ENCODE measurements at regions of chr11 and their contacts with region 1.

Region 1: GRCh38 chr11:95067039-95067840 is 521 bp downstream of the SRSF8 start:
- DNase-seq: peak; percentile 72 to 80 (median 78)
- H3K4me3 ChIP-seq: peak overlapping the region; percentile 92 to 96
- H3K4me3 Mint-ChIP-seq: peak overlapping the region; percentile 94 to 98 (median 96)
- H3K27ac ChIP-seq: peak overlapping the region; percentile 95
- H3K27ac Mint-ChIP-seq: peak overlapping the region; percentile 94 to 98 (median 96)
- H3K4me1 ChIP-seq: peaks cover 32% of the 10 kb centered on the region
- H3K4me1 Mint-ChIP-seq: peaks cover 20 to 35% (median 29%) of the 10 kb centered on the region in 4 donors
- H3K27me3 ChIP-seq: no peaks in the 10 kb centered on the region
- H3K27me3 Mint-ChIP-seq: peaks cover 0 to 3% of the 10 kb centered on the region in 2 donors

Region 2: DNA sequence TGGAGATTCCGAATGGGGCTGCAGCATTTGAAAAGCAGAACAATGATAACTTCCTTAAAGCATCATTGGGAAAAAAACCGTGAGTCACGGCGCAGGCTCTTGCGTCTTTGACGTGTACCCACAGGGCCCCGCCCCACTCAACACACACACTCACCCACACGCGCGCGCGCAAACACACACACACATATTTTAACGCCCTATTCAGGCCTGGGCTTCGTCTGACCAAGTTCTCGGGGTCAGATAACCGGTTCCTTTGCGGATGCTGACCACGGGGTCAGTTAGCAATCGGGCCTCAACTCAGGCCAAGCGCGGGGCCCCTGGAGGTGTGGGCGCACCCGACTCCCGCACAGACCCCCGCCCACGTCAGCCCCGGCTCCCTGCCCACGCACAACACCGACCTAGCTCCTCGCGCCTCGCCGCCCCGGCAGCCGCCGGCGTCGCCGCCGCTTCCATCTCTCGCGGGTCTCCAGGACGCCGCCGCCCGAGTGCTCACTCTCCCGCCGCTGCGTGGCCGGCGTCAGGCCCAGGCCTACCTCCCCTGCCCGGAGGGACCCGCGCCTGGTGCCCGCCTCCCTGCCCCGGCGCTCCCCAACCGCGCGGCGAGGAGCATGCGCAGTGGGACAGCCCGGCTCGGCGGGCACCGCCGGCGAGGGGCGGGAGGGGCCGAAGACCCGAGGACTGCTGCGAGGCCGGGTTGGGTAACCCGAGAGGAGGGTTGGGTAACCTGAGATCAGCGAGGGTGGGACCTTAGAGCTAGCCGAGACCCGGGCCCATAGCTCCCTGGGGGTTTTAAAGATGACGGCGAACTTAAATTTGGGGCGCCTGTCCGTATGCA is 1869.6 kb before region 1 on chr11 and contains the start of gene SLC36A4:
- CTCF ChIA-PET with region 1: no interaction called
- POLR2A ChIA-PET with region 1: no interaction called
- intact Hi-C with region 1: loop called (anchors 5 kb)
- DNase-seq: peak; percentile 86 to 90 (median 88)
- H3K4me3 ChIP-seq: peak within 1 kb of the TSS; percentile 59 to 61
- H3K4me3 Mint-ChIP-seq: peak within 1 kb of the TSS; percentile 92 to 99 (median 96)
- H3K27ac ChIP-seq: peak within 1 kb of the TSS; percentile 92
- H3K27ac Mint-ChIP-seq: peak within 1 kb of the TSS; percentile 96 to 99 (median 98)
- H3K4me1 ChIP-seq: no peaks in the 10 kb centered on the region
- H3K4me1 Mint-ChIP-seq: peaks cover 15 to 34% (median 23%) of the 10 kb centered on the region in 4 donors
- H3K27me3 ChIP-seq: no peaks in the 10 kb centered on the region
- H3K27me3 Mint-ChIP-seq: peaks cover 0 to 3% of the 10 kb centered on the region in 2 donors
- total RNA-seq, gene SLC36A4: 15.4 to 21.5 TPM

Region 3: DNA sequence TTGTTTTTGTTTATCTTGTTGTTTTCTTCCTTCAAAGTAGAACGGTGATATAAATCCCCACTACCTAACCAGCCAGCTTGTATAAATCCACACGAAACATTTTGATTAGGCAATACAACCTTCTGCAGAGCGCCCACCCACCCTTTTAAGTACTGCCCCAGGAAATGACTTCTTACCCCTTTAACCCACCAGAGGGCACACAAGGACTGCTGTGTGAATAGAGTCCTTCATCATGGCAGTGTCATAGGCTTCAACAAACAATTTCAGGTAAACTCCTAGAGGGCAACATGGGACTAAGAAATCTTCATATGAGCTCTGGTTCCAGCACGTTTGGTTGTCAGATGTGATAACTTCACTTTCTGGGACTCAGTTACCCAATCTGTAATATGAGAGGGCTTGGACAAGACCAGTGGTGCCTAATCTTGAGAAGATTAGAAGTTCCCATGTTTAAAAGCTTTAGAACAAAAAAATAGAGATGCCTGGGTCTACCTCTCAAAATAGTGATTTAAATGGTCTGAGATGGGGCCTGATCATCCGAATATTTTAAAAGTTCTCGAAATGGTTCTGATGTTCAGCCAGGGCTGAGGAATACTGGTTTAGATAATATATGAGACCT is 444.0 kb before region 1 on chr11:
- CTCF ChIA-PET with region 1: no interaction called
- POLR2A ChIA-PET with region 1: no interaction called
- intact Hi-C with region 1: loop called (anchors 1 kb)
- DNase-seq: peak in 4 of 5 donors; percentile 28 to 39 (median 30)
- H3K4me3 ChIP-seq: no peak overlapping the region
- H3K4me3 Mint-ChIP-seq: no peak overlapping the region
- H3K27ac ChIP-seq: no peak overlapping the region
- H3K27ac Mint-ChIP-seq: no peak overlapping the region
- H3K4me1 ChIP-seq: no peaks in the 10 kb centered on the region
- H3K4me1 Mint-ChIP-seq: peaks cover 0 to 2% (median 0%) of the 10 kb centered on the region in 4 donors
- H3K27me3 ChIP-seq: no peaks in the 10 kb centered on the region
- H3K27me3 Mint-ChIP-seq: peaks cover 5 to 7% of the 10 kb centered on the region in 2 donors

Region 4: GRCh38 chr11:95035316-95035715 is 31.9 kb before region 1 on chr11:
- CTCF ChIA-PET with region 1: interaction called, 7 read pairs
- POLR2A ChIA-PET with region 1: interaction called, 11 read pairs
- intact Hi-C with region 1: no loop called
- DNase-seq: no peak
- H3K4me3 ChIP-seq: no peak overlapping the region
- H3K4me3 Mint-ChIP-seq: no peak overlapping the region
- H3K27ac ChIP-seq: no peak overlapping the region
- H3K27ac Mint-ChIP-seq: no peak overlapping the region
- H3K4me1 ChIP-seq: no peaks in the 10 kb centered on the region
- H3K4me1 Mint-ChIP-seq: peaks cover 0 to 2% (median 0%) of the 10 kb centered on the region in 4 donors
- H3K27me3 ChIP-seq: no peaks in the 10 kb centered on the region
- H3K27me3 Mint-ChIP-seq: peaks cover 11 to 20% of the 10 kb centered on the region in 2 donors

Region 5: GRCh38 chr11:95089620-95090542 is 22.6 kb after region 1 on chr11 and contains the start of gene ENDOD1:
- CTCF ChIA-PET with region 1: interaction called, 124 read pairs
- POLR2A ChIA-PET with region 1: interaction called, 376 read pairs
- intact Hi-C with region 1: loop called (anchors 1 kb)
- DNase-seq: peak; percentile 86 to 89 (median 87)
- H3K4me3 ChIP-seq: peak within 1 kb of the TSS; percentile 45 to 76
- H3K4me3 Mint-ChIP-seq: peak within 1 kb of the TSS; percentile 91 to 96 (median 92)
- H3K27ac ChIP-seq: peak within 1 kb of the TSS; percentile 67
- H3K27ac Mint-ChIP-seq: peak within 1 kb of the TSS; percentile 92 to 99 (median 98)
- H3K4me1 ChIP-seq: peaks cover 43% of the 10 kb centered on the region
- H3K4me1 Mint-ChIP-seq: peaks cover 36 to 55% (median 46%) of the 10 kb centered on the region in 4 donors
- H3K27me3 ChIP-seq: no peaks in the 10 kb centered on the region
- H3K27me3 Mint-ChIP-seq: no peaks in the 10 kb centered on the region
- total RNA-seq, gene ENDOD1: 12.8 to 13.3 TPM

Region 6: DNA sequence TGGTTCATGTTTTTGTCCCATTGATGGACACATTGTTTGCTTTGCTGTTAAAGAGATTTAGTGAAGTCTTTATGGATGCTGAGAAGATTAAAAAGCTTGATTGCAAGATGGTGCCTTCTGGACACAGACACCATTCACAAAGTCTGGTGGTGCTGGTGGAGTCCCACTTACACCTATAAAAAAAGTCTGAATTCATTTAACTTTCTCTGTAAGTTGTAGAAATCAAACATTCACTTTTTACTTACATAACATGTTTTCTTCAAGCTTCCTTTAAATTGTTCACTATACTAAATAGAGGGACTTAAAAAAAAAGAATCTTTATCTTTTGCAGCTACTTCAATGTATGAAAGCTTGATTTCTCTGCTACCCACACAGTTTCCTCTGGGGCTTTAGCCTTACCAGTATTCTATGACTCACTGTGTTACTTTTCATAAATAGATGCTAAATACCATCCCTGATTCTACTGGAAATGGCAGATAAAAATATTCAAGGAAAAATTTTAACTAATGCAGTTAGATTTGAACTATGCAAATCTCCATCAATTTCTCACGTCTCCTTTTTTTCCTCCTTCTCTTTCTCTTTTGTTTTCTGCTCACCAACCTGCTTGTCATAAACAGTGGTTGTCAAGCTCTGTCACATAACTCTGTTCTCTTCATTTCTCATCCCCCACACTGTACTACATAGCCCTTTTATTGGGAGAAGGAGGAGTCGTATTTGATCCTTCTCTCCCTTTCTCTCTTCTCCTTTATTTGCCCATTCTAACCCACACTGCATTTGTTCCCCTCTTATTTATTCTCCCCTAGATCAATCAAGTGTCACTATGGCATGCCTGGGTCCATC is 632.6 kb after region 1 on chr11:
- CTCF ChIA-PET with region 1: interaction called, 10 read pairs
- POLR2A ChIA-PET with region 1: interaction called, 9 read pairs
- intact Hi-C with region 1: loop called (anchors 5 kb)
- DNase-seq: peak; percentile 39 to 52 (median 43)
- H3K4me3 ChIP-seq: peak overlapping the region; percentile 3 to 33
- H3K4me3 Mint-ChIP-seq: peak overlapping the region; percentile 72 to 88 (median 82)
- H3K27ac ChIP-seq: peak overlapping the region; percentile 65
- H3K27ac Mint-ChIP-seq: peak overlapping the region; percentile 90 to 97 (median 96)
- H3K4me1 ChIP-seq: peaks cover 80% of the 10 kb centered on the region
- H3K4me1 Mint-ChIP-seq: peaks cover 38 to 60% (median 54%) of the 10 kb centered on the region in 4 donors
- H3K27me3 ChIP-seq: no peaks in the 10 kb centered on the region
- H3K27me3 Mint-ChIP-seq: no peaks in the 10 kb centered on the region

Region 7: DNA sequence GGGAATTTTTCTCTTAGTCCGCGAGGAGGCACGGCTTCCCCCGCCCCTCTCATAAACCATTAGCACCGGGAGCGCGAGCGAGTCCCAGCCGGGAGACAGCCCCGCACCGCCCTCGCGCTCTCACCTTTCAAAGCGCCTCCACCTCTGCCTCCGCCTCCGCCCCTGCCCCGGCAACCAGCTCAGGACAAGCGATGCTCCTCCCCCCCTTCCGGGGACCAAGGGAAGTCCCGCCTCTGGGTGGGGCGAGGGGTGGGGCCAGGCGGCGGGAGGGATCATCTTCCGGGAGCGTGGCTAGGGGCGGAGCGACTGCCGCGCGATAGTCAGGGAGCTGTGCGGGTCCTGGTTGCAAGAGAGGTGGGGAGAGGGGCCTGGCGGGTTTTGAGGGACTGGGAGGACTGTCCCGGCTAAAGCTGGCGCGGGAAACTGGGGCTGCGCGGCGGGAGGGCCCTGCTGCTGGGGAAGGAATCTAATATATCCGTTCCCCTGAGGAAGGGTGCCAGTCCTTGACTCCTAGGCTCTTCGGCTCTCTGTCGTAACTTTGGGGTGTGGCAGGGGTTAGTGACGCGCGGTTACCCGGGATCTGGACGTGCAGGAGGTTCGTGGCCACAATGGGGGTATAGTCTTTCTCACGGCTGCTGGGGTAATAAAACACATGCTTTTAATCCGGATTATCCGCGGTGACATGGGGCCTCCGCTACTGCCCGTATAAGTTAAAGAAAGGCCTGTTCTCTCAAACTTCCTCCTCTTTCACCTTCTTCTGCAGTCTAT is 1322.7 kb after region 1 on chr11 and contains the starts of genes CCDC82 and JRKL:
- CTCF ChIA-PET with region 1: interaction called, 4 read pairs
- POLR2A ChIA-PET with region 1: interaction called, 23 read pairs
- intact Hi-C with region 1: loop called (anchors 1 kb)
- DNase-seq: peak; percentile 97 to 99 (median 98)
- H3K4me3 ChIP-seq: peak within 1 kb of the TSS; percentile 85 to 93
- H3K4me3 Mint-ChIP-seq: peak within 1 kb of the TSS; percentile 92 to 98 (median 94)
- H3K27ac ChIP-seq: peak within 1 kb of the TSS; percentile 79
- H3K27ac Mint-ChIP-seq: peak within 1 kb of the TSS; percentile 91 to 98 (median 97)
- H3K4me1 ChIP-seq: peaks cover 36% of the 10 kb centered on the region
- H3K4me1 Mint-ChIP-seq: peaks cover 22 to 59% (median 37%) of the 10 kb centered on the region in 4 donors
- H3K27me3 ChIP-seq: no peaks in the 10 kb centered on the region
- H3K27me3 Mint-ChIP-seq: no peaks in the 10 kb centered on the region
- total RNA-seq, gene CCDC82: 37.9 to 42.8 TPM
- total RNA-seq, gene JRKL: 18.3 to 20.0 TPM

Measured in CD4-positive, alpha-beta memory T cell (primary cell).